ENCODE measurements at regions of chr11 and their contacts with region 1.

Region 1: GRCh38 chr11:58579192-58580129 is 598 bp downstream of the ZFP91 start:
- DNase-seq: peak; percentile 96
- ATAC-seq: peak; percentile 33
- H3K4me3 Mint-ChIP-seq: peak overlapping the region; percentile 89
- H3K27ac Mint-ChIP-seq: peak overlapping the region; percentile 99
- H3K4me1 Mint-ChIP-seq: peaks cover 44% of the 10 kb centered on the region
- H3K27me3 Mint-ChIP-seq: no peaks in the 10 kb centered on the region

Region 2: GRCh38 chr11:57426929-57427726 is 1152.3 kb before region 1 on chr11 and contains the start of gene SLC43A3:
- CTCF ChIA-PET with region 1: no interaction called
- POLR2A ChIA-PET with region 1: no interaction called
- intact Hi-C with region 1: loop called (anchors 1 to 5 kb)
- DNase-seq: peak; percentile 90
- ATAC-seq: peak; percentile 67
- H3K4me3 Mint-ChIP-seq: peak within 1 kb of the TSS; percentile 98
- H3K27ac Mint-ChIP-seq: peak within 1 kb of the TSS; percentile 95
- H3K4me1 Mint-ChIP-seq: peaks cover 34% of the 10 kb centered on the region
- H3K27me3 Mint-ChIP-seq: no peaks in the 10 kb centered on the region
- total RNA-seq, gene SLC43A3: 268 to 333 TPM

Region 3: GRCh38 chr11:57667736-57668435 is 911.6 kb before region 1 on chr11 and contains the start of gene ZDHHC5:
- CTCF ChIA-PET with region 1: no interaction called
- POLR2A ChIA-PET with region 1: no interaction called
- intact Hi-C with region 1: loop called (anchors 1 kb)
- DNase-seq: peak; percentile 100
- ATAC-seq: peak; percentile 88
- H3K4me3 Mint-ChIP-seq: peak within 1 kb of the TSS; percentile 99
- H3K27ac Mint-ChIP-seq: peak within 1 kb of the TSS; percentile 99
- H3K4me1 Mint-ChIP-seq: peaks cover 37% of the 10 kb centered on the region
- H3K27me3 Mint-ChIP-seq: no peaks in the 10 kb centered on the region
- total RNA-seq, gene ZDHHC5: 46.2 to 60.0 TPM

Region 4: DNA sequence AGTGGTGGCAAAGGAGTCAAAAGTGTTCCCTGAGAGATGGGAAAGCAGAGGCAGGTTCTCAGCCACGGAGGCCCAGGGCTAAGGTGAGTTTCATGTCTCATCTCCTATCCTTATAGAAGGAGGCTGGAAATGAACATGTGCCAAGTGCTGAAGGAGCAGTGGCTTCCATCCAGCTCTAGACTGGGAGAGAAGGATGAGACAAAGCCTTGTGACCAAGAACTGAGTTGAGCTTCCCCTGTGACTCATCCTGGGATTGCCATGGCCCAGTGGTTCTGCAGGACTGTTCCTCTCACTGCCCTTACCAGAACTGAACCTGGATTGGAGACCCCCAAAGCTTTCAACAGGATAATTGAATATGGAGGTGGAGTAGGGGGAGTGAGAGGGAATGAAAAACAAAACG is 572.5 kb before region 1 on chr11:
- CTCF ChIA-PET with region 1: no interaction called
- POLR2A ChIA-PET with region 1: no interaction called
- intact Hi-C with region 1: no loop called
- DNase-seq: no peak
- ATAC-seq: no peak
- H3K4me3 Mint-ChIP-seq: no peak overlapping the region
- H3K27ac Mint-ChIP-seq: no peak overlapping the region
- H3K4me1 Mint-ChIP-seq: peaks cover 4% of the 10 kb centered on the region
- H3K27me3 Mint-ChIP-seq: peaks cover 20% of the 10 kb centered on the region

Region 5: DNA sequence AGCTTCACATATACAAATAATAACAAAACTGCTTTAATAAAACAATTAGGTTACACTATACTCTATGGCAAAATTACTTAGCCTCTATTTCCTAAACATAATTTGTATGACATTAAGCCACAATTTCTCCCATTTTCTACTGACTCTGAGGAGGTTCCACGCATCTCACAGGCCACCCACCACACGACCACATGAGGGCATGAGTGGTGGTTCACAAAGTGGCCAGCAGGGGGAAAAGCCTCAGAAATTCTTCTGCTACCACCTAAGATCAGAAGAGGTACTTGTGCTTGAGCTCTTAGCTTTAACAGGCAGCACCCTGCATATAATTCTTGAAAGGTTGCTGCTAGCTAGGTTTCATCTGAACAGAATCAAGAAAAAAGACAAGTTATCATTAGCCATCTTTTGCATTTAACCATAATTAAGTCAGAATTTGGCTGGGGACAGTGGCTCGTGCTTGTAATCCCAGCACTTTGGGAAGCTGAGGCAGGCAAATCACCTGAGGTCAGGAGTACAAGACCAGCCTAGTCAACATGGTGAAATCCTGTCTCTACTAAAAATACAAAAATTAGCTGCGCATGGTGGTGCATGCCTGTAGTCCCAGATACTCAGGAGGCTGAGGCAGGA is 11.5 kb before region 1 on chr11:
- CTCF ChIA-PET with region 1: interaction called, 32 read pairs
- POLR2A ChIA-PET with region 1: interaction called, 12 read pairs
- intact Hi-C with region 1: no loop called
- DNase-seq: peak; percentile 85
- ATAC-seq: peak; percentile 92
- H3K4me3 Mint-ChIP-seq: peak overlapping the region; percentile 32
- H3K27ac Mint-ChIP-seq: peak overlapping the region; percentile 76
- H3K4me1 Mint-ChIP-seq: peaks cover 64% of the 10 kb centered on the region
- H3K27me3 Mint-ChIP-seq: no peaks in the 10 kb centered on the region

Region 6: DNA sequence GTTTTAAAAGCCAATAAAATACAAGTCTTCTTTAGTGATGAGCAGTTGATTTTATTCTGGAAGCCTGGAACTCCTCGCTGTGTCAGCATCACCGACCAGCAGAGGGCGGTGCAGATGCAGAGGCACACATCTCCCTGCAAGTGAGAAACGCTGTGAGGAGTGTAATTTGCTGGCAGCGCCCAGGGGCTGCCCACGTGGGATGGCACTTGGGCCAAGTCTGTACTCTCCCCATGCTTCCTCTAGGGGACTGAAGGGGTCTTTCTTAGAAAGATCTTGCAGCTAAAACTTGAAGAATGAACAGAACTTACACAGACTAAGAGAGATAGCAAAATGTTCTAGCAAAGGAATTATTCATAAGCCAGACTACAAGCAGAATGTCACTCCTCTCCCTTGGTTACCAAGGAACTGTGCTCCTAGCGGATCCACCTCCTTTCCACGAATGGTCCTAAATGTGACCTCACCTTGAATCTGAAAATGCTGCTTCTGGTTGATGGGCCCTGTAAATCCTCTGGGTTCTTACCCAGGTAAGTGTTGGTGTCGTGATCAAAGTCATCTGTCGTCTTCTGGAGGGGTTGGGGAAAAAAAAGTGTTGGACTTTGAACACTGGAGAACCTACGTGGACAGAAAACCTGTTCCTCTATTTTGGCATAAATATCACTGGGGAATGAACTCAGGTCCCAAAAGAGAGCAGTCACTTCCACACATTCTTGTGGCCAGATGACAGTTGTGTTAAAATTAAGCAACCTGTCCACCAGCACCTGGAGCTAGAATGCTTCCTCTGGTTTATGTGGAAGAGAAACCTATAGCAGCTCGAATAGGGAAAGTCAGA is 74.8 kb after region 1 on chr11:
- CTCF ChIA-PET with region 1: interaction called, 4 read pairs
- POLR2A ChIA-PET with region 1: no interaction called
- intact Hi-C with region 1: loop called in 1 of 2 experiments (anchors 2 kb)
- DNase-seq: peak; percentile 90
- ATAC-seq: peak; percentile 87
- H3K4me3 Mint-ChIP-seq: no peak overlapping the region
- H3K27ac Mint-ChIP-seq: peak overlapping the region; percentile 62
- H3K4me1 Mint-ChIP-seq: peaks cover 20% of the 10 kb centered on the region
- H3K27me3 Mint-ChIP-seq: no peaks in the 10 kb centered on the region

Region 7: GRCh38 chr11:59142530-59143507 is 563.4 kb after region 1 on chr11 and contains the start of gene FAM111A:
- CTCF ChIA-PET with region 1: no interaction called
- POLR2A ChIA-PET with region 1: no interaction called
- intact Hi-C with region 1: loop called (anchors 2 kb)
- DNase-seq: peak; percentile 90
- ATAC-seq: peak; percentile 77
- H3K4me3 Mint-ChIP-seq: peak within 1 kb of the TSS; percentile 91
- H3K27ac Mint-ChIP-seq: peak within 1 kb of the TSS; percentile 93
- H3K4me1 Mint-ChIP-seq: peaks cover 47% of the 10 kb centered on the region
- H3K27me3 Mint-ChIP-seq: no peaks in the 10 kb centered on the region
- total RNA-seq, gene FAM111A: 87.9 to 135 TPM

Region 8: GRCh38 chr11:59753650-59754493 is 1174.4 kb after region 1 on chr11:
- CTCF ChIA-PET with region 1: no interaction called
- POLR2A ChIA-PET with region 1: no interaction called
- intact Hi-C with region 1: loop called in 1 of 2 experiments (anchors 5 kb)
- DNase-seq: peak; percentile 92
- ATAC-seq: peak; percentile 79
- H3K4me3 Mint-ChIP-seq: peak overlapping the region; percentile 84
- H3K27ac Mint-ChIP-seq: peak overlapping the region; percentile 53
- H3K4me1 Mint-ChIP-seq: peaks cover 15% of the 10 kb centered on the region
- H3K27me3 Mint-ChIP-seq: peaks cover 6% of the 10 kb centered on the region